MCF 10A (cell line): ENCODE measurements at regions of chr1 and their contacts with region 1.

Region 1: GRCh38 chr1:32215629-32216480 is 6.3 kb downstream of the TMEM234 start:
- DNase-seq: peak; percentile 75
- H3K4me3 Mint-ChIP-seq: no peak overlapping the region
- H3K27ac Mint-ChIP-seq: peak overlapping the region; percentile 54
- H3K4me1 Mint-ChIP-seq: peaks cover 1% of the 10 kb centered on the region
- H3K27me3 Mint-ChIP-seq: no peaks in the 10 kb centered on the region
- CTCF ChIP-seq: peak; percentile 79

Region 2: GRCh38 chr1:32195972-32196823 is 19.7 kb before region 1 on chr1:
- CTCF ChIA-PET with region 1: interaction called, 11 read pairs
- POLR2A ChIA-PET with region 1: interaction called, 4 read pairs
- intact Hi-C with region 1: no loop called
- DNase-seq: no peak
- H3K4me3 Mint-ChIP-seq: no peak overlapping the region
- H3K27ac Mint-ChIP-seq: peak overlapping the region; percentile 46
- H3K4me1 Mint-ChIP-seq: peaks cover 6% of the 10 kb centered on the region
- H3K27me3 Mint-ChIP-seq: no peaks in the 10 kb centered on the region
- CTCF ChIP-seq: no peak

Region 3: GRCh38 chr1:32228771-32229170 is 12.9 kb after region 1 on chr1:
- CTCF ChIA-PET with region 1: interaction called, 16 read pairs
- POLR2A ChIA-PET with region 1: interaction called, 4 read pairs
- intact Hi-C with region 1: no loop called
- DNase-seq: no peak
- H3K4me3 Mint-ChIP-seq: no peak overlapping the region
- H3K27ac Mint-ChIP-seq: no peak overlapping the region
- H3K4me1 Mint-ChIP-seq: peaks cover 7% of the 10 kb centered on the region
- H3K27me3 Mint-ChIP-seq: no peaks in the 10 kb centered on the region
- CTCF ChIP-seq: no peak

Region 4: DNA sequence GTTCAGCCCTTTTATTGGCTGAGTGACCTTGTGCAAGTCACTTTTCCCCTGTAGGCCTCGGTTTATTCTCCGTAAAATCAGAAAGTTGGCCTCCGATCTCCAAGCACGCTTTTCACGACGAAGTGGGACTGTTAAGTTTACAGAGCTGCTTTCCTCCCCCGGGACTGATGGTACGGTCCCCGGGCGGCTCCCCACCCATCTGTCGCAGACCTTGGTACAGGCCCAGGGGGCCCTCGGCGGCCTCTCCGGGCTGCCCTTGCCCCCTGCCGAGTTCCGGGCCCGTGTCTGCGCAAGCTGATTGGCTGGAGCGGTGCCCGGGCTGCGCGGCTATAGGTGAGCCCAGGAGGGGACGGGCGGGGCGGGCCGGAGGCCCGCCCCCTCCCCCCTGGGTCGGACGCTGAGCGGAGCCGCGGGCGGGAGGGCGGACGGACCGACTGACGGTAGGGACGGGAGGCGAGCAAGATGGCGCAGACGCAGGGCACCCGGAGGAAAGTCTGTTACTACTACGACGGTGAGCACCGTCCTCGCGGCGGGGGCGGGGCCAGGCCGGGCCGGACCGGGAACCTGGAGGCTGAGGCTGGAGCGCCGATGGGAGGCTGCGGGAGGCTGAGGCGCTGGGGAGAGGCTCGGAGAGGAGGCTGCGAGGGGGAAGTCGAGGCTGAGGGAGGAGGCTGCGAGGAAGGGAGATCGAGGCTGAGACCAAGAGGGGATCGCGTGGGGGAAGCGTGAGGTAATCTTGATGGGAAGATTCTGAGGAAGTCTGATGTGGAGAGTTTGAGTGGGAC is 76.0 kb after region 1 on chr1 and contains the start of gene HDAC1:
- CTCF ChIA-PET with region 1: interaction called, 21 read pairs
- POLR2A ChIA-PET with region 1: interaction called, 5 read pairs
- intact Hi-C with region 1: loop called (anchors 2 kb)
- DNase-seq: peak; percentile 96
- H3K4me3 Mint-ChIP-seq: peak within 1 kb of the TSS; percentile 99
- H3K27ac Mint-ChIP-seq: peak within 1 kb of the TSS; percentile 96
- H3K4me1 Mint-ChIP-seq: peaks cover 22% of the 10 kb centered on the region
- H3K27me3 Mint-ChIP-seq: no peaks in the 10 kb centered on the region
- CTCF ChIP-seq: no peak
- total RNA-seq, gene HDAC1: 39.7 and 62.9 TPM in 2 replicates

Region 5: GRCh38 chr1:32394141-32394889 is 178.5 kb after region 1 on chr1 and contains the start of gene BSDC1:
- CTCF ChIA-PET with region 1: interaction called, 16 read pairs
- POLR2A ChIA-PET with region 1: interaction called, 7 read pairs
- intact Hi-C with region 1: loop called (anchors 5 kb)
- DNase-seq: peak; percentile 99
- H3K4me3 Mint-ChIP-seq: peak within 1 kb of the TSS; percentile 91
- H3K27ac Mint-ChIP-seq: peak within 1 kb of the TSS; percentile 97
- H3K4me1 Mint-ChIP-seq: peaks cover 6% of the 10 kb centered on the region
- H3K27me3 Mint-ChIP-seq: no peaks in the 10 kb centered on the region
- CTCF ChIP-seq: no peak
- total RNA-seq, gene BSDC1: 52.6 and 56.2 TPM in 2 replicates

Region 6: DNA sequence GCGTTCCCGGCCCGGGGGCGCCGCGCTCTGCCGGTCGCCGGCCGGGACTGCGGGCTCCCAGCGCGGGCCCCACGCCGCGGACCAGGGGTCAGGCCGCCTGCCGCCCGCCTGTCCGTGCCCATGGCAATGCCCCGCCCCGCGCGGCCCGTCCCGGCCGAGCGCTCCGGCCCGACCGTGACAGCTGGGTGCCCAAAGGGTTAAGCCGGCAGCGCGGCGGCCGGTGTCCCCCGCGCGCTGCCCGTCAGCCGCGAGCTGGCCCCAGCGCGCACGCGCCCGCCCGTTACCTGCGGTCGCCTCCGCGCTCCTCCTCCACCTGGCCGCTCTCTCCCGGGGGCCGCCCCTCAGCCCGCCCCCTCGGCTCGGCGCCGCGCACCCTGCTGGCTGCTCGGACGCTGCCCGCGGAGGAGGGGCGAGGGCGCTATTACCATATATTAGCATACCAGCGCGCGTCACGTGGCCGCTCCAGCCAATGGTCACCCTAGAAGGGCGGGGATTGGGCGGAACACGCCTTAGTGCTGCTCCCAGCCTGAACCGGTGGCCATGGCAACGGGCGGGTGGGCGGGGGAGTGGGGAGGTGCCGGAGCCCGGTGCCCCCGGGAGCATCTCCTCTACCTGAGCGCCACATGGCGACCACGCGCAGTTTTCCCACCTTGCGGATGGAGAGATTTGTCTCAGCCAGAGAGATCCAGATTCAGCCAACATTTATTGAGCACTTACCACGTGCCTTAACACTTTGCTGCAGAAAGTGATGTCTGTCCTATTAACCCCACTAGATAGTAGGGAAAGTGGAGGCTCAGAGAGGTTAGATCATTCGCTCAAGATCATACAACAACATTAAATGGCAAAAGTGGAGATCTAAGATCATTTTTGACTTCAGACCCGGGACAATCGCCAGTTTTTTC is 1215.1 kb after region 1 on chr1 and contains the start of gene PHC2:
- CTCF ChIA-PET with region 1: no interaction called
- POLR2A ChIA-PET with region 1: no interaction called
- intact Hi-C with region 1: no loop called
- DNase-seq: peak; percentile 97
- H3K4me3 Mint-ChIP-seq: no peak within 1 kb of the TSS
- H3K27ac Mint-ChIP-seq: no peak within 1 kb of the TSS
- H3K4me1 Mint-ChIP-seq: peaks cover 21% of the 10 kb centered on the region
- H3K27me3 Mint-ChIP-seq: no peaks in the 10 kb centered on the region
- CTCF ChIP-seq: no peak
- total RNA-seq, gene PHC2: 117 and 137 TPM in 2 replicates